Naive thymus-derived CD4-positive, alpha-beta T cell (primary cell): ENCODE measurements at regions of chr13 and their contacts with region 1.

Region 1: GRCh38 chr13:75694722-75695121 is 58.6 kb downstream of the LMO7 start:
- DNase-seq: no peak
- ATAC-seq: no peak
- H3K4me3 ChIP-seq: no peak overlapping the region
- H3K4me3 Mint-ChIP-seq: peak overlapping the region in 1 of 10 donors; percentile 1
- H3K27ac ChIP-seq: no peak overlapping the region
- H3K27ac Mint-ChIP-seq: no peak overlapping the region
- H3K4me1 ChIP-seq: no peaks in the 10 kb centered on the region
- H3K4me1 Mint-ChIP-seq: peaks cover 0 to 4% (median 0%) of the 10 kb centered on the region in 7 donors
- H3K27me3 ChIP-seq: no peaks in the 10 kb centered on the region
- H3K27me3 Mint-ChIP-seq: no peaks in the 10 kb centered on the region

Region 2: DNA sequence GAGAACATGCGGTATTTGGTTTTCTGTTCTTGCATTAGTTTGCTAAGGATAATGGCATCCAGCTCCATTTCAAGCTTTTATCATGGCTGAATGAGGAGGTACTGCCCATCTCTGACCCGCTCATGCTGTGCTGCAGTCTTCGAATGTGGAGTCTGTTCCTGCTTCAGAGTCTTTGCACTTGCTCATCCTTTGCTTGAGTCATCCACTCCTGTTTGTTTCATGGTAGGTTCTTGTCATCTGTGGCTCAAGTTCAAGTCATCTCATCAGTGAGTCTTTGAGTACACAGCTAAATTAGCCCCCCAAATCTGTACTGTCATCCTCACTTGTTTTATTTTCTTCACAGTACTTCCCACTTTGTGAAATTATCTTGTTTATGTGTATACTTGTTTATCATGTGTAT is 139.7 kb before region 1 on chr13:
- CTCF ChIA-PET with region 1: no interaction called
- POLR2A ChIA-PET with region 1: no interaction called
- intact Hi-C with region 1: no loop called
- DNase-seq: no peak
- ATAC-seq: no peak
- H3K4me3 ChIP-seq: no peak overlapping the region
- H3K4me3 Mint-ChIP-seq: no peak overlapping the region
- H3K27ac ChIP-seq: no peak overlapping the region
- H3K27ac Mint-ChIP-seq: peak overlapping the region in 1 of 9 donors; percentile 41
- H3K4me1 ChIP-seq: peaks cover 9 to 16% of the 10 kb centered on the region in 2 donors
- H3K4me1 Mint-ChIP-seq: peaks cover 35 to 90% (median 80%) of the 10 kb centered on the region in 7 donors
- H3K27me3 ChIP-seq: no peaks in the 10 kb centered on the region
- H3K27me3 Mint-ChIP-seq: no peaks in the 10 kb centered on the region

Region 3: GRCh38 chr13:75803164-75803611 is 108.5 kb after region 1 on chr13:
- CTCF ChIA-PET with region 1: interaction called, 4 read pairs
- POLR2A ChIA-PET with region 1: no interaction called
- intact Hi-C with region 1: loop called (anchors 1 to 5 kb)
- DNase-seq: peak in 7 of 9 donors; percentile 40 to 68 (median 62)
- ATAC-seq: peak; percentile 95
- H3K4me3 ChIP-seq: peak overlapping the region; percentile 4
- H3K4me3 Mint-ChIP-seq: peak overlapping the region; percentile 4 to 85 (median 78)
- H3K27ac ChIP-seq: peak overlapping the region; percentile 60
- H3K27ac Mint-ChIP-seq: peak overlapping the region in 8 of 9 donors; percentile 88 to 97 (median 92)
- H3K4me1 ChIP-seq: peaks cover 0 to 33% of the 10 kb centered on the region in 2 donors
- H3K4me1 Mint-ChIP-seq: peaks cover 15 to 70% (median 49%) of the 10 kb centered on the region in 7 donors
- H3K27me3 ChIP-seq: no peaks in the 10 kb centered on the region
- H3K27me3 Mint-ChIP-seq: no peaks in the 10 kb centered on the region

Region 4: DNA sequence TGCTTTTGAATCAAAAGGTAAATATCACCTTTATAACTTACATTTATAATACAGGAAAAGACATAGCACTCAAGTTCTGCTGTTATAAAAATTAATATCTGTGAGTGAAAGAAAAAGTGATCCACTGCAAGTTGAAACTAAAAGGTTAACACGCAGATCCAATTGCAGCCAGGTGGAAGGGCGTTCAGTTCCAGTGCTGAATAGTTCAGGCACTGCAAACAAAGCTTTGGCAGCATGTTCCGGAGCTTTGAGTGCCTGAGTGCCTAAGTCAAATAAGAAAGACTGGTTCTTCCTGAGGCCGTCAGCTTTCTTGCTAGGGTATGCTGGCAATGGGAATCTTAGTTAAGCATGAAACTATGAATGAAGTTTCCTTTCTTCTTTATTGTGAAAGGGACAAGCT is 141.7 kb after region 1 on chr13:
- CTCF ChIA-PET with region 1: interaction called, 9 read pairs
- POLR2A ChIA-PET with region 1: no interaction called
- intact Hi-C with region 1: loop called in 1 of 2 experiments (anchors 5 kb)
- DNase-seq: no peak
- ATAC-seq: no peak
- H3K4me3 ChIP-seq: no peak overlapping the region
- H3K4me3 Mint-ChIP-seq: no peak overlapping the region
- H3K27ac ChIP-seq: no peak overlapping the region
- H3K27ac Mint-ChIP-seq: no peak overlapping the region
- H3K4me1 ChIP-seq: no peaks in the 10 kb centered on the region
- H3K4me1 Mint-ChIP-seq: peaks cover 0 to 33% (median 13%) of the 10 kb centered on the region in 7 donors
- H3K27me3 ChIP-seq: no peaks in the 10 kb centered on the region
- H3K27me3 Mint-ChIP-seq: no peaks in the 10 kb centered on the region

Region 5: GRCh38 chr13:75870397-75870903 is 175.7 kb after region 1 on chr13:
- CTCF ChIA-PET with region 1: interaction called, 18 read pairs
- POLR2A ChIA-PET with region 1: no interaction called
- intact Hi-C with region 1: loop called (anchors 1 to 2 kb)
- DNase-seq: peak in 6 of 9 donors; percentile 12 to 61 (median 38)
- ATAC-seq: peak; percentile 75
- H3K4me3 ChIP-seq: peak overlapping the region; percentile 50
- H3K4me3 Mint-ChIP-seq: peak overlapping the region; percentile 60 to 85 (median 80)
- H3K27ac ChIP-seq: peak overlapping the region; percentile 52
- H3K27ac Mint-ChIP-seq: peak overlapping the region; percentile 72 to 92 (median 86)
- H3K4me1 ChIP-seq: peaks cover 0 to 13% of the 10 kb centered on the region in 2 donors
- H3K4me1 Mint-ChIP-seq: peaks cover 4 to 29% (median 19%) of the 10 kb centered on the region in 7 donors
- H3K27me3 ChIP-seq: no peaks in the 10 kb centered on the region
- H3K27me3 Mint-ChIP-seq: peaks cover 0 to 13% (median 3%) of the 10 kb centered on the region in 5 donors

Region 6: DNA sequence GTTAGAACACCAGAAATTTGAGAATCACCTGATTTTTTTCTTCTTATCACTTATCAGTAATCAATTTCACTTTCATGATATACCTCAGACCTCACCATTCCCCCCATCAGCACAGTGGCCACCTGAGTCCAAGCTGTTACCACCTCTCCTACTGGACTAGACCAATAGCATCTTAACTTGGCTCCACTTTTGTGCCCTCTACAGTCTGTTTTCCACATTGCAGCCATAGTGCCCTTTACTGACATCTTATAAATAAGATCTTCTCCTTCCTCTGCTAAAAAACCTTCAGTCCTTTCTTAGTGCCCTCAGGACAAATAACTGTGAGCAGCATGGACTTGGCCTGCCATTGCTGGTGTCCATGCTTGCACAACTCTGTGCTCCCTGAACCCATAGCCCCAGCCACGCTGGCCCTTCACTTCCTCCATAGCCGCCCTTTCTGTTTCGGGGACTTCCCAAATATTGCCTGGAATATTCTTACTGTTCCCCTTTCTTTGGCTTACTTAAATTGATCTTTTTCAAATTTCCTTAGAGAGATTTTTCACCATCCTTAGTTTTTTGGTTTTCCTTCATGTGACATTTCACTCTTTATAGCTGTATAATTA is 322.2 kb after region 1 on chr13:
- CTCF ChIA-PET with region 1: interaction called, 6 read pairs
- POLR2A ChIA-PET with region 1: no interaction called
- intact Hi-C with region 1: loop called (anchors 1 kb)
- DNase-seq: peak in 5 of 9 donors; percentile 2 to 21 (median 4)
- ATAC-seq: no peak
- H3K4me3 ChIP-seq: no peak overlapping the region
- H3K4me3 Mint-ChIP-seq: no peak overlapping the region
- H3K27ac ChIP-seq: no peak overlapping the region
- H3K27ac Mint-ChIP-seq: no peak overlapping the region
- H3K4me1 ChIP-seq: no peaks in the 10 kb centered on the region
- H3K4me1 Mint-ChIP-seq: peaks cover 0 to 11% (median 0%) of the 10 kb centered on the region in 7 donors
- H3K27me3 ChIP-seq: no peaks in the 10 kb centered on the region
- H3K27me3 Mint-ChIP-seq: peaks cover 0 to 5% (median 0%) of the 10 kb centered on the region in 5 donors

Region 7: DNA sequence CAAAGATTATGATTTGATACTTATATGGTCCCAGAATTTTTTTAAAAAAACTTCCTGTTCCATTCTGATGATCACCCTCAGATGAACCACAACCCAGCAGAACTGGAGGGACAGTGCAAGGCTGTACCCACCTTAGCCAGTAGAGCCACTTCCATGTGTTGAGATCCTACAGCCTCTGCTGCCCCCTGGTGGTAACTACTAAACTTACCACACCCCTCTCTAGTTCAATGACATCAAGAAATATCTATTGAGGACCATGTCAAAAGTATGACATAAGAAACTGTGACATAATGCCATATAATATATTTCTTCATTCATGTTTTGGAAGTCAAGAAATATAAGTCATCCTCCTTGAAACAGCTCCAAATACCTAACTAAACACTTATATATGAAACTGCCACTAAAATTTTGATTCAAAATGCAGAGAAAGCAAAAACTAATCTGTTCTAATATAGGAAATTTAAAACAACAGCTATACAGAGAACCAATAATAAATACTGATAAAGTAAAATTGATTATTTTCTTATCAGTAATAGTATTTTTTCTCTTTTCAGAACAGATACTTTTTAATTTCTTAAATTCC is 778.9 kb after region 1 on chr13:
- CTCF ChIA-PET with region 1: interaction called, 20 read pairs
- POLR2A ChIA-PET with region 1: no interaction called
- intact Hi-C with region 1: loop called (anchors 1 kb)
- DNase-seq: peak; percentile 25 to 70 (median 61)
- ATAC-seq: peak; percentile 97
- H3K4me3 ChIP-seq: no peak overlapping the region
- H3K4me3 Mint-ChIP-seq: no peak overlapping the region
- H3K27ac ChIP-seq: no peak overlapping the region
- H3K27ac Mint-ChIP-seq: peak overlapping the region in 1 of 9 donors; percentile 21
- H3K4me1 ChIP-seq: no peaks in the 10 kb centered on the region
- H3K4me1 Mint-ChIP-seq: no peaks in the 10 kb centered on the region
- H3K27me3 ChIP-seq: no peaks in the 10 kb centered on the region
- H3K27me3 Mint-ChIP-seq: peaks cover 6 to 29% (median 7%) of the 10 kb centered on the region in 5 donors

Region 8: DNA sequence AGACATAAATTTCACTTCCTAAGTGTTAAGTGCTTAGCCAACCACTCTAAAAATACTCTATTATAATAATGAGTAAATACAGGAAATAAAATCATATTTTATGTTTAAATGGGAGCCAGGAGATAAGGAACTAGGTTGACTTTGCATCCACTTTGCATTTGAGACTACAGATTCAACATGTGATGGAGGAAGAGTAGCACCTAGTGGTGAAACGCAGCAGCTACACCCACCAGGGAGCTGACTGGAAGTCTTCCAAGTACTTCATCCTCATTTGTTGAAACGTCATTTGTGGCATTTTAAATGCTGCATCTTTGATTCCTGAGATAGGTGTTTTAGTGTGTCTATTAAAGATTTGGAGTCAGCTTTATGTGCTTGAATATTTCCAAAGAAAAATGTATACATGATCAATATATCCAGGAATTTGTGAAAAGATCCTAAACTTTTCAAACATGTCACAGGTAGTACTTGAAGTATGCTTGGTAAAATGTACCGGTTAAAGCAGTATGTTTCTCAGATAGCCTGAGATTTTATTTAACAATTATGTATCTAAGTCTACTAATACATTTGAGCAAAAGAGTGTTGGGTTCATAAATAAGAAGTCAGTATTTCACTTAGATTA is 1208.9 kb after region 1 on chr13:
- CTCF ChIA-PET with region 1: interaction called, 4 read pairs
- POLR2A ChIA-PET with region 1: interaction called, 3 read pairs
- intact Hi-C with region 1: loop called (anchors 1 to 2 kb)
- DNase-seq: peak in 8 of 9 donors; percentile 51 to 75 (median 66)
- ATAC-seq: peak; percentile 94
- H3K4me3 ChIP-seq: no peak overlapping the region
- H3K4me3 Mint-ChIP-seq: no peak overlapping the region
- H3K27ac ChIP-seq: no peak overlapping the region
- H3K27ac Mint-ChIP-seq: no peak overlapping the region
- H3K4me1 ChIP-seq: no peaks in the 10 kb centered on the region
- H3K4me1 Mint-ChIP-seq: no peaks in the 10 kb centered on the region
- H3K27me3 ChIP-seq: peaks cover 0 to 3% of the 10 kb centered on the region in 2 donors
- H3K27me3 Mint-ChIP-seq: peaks cover 4 to 32% (median 30%) of the 10 kb centered on the region in 5 donors